Kidney (tissue), 22 donors: ENCODE measurements at regions of chr14 and their contacts with region 1.

Region 1: DNA sequence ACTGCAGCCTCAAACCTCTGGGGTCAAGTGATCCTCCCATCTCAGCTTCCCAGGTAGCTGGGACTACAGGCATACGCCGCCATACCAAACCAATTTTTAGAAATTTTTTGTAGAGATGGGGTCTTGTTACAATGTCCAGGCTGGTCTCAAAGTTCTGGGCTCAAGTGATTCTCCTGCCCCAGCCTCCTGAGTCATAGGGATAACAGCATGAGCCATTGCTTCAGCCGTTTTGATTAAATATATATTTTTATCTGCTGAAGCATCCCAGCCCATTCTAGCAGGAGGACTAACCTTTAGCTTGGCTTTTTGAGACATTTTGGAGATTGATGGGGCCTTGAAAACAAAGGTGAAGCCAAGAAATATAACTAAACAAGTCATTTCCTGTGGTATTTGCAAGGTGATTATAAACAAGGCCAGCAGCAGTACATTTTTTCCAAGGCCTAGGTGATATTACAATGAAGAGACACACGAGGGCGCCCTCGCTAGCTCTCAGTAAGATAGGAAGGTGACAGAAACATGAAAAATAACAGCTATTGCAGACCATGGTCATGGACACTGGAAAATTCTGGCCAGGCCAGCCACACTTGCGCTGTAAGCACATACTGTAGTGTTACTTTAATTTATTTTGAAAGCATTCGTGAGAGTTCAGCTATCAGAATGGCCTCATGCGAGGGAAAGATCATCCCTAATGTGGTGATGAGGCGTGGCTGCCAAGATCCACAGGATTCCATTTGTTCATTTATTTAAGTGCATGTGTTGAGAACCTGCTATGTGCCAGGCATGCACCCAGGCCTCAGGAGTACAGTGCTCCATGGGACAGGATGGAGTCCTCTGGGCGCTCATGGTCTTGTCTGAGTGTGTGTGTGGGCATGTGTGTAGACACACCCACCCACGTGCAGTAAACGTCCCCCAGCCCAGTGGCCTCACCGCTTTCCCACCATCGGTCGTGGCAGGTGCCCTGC is 63.5 kb downstream of the DGLUCY start:
- DNase-seq: peak; percentile 58 to 81 (median 68)
- H3K4me3 ChIP-seq: no peak overlapping the region
- H3K27ac ChIP-seq: no peak overlapping the region
- H3K4me1 ChIP-seq: no peaks in the 10 kb centered on the region
- H3K27me3 ChIP-seq: no peaks in the 10 kb centered on the region
- CTCF ChIP-seq: peak; percentile 62

Region 2: GRCh38 chr14:90903101-90903500 is 274.3 kb before region 1 on chr14:
- intact Hi-C with region 1: loop called (anchors 5 kb)
- DNase-seq: peak in 4 of 5 donors; percentile 43 to 76 (median 58)
- H3K4me3 ChIP-seq: no peak overlapping the region
- H3K27ac ChIP-seq: no peak overlapping the region
- H3K4me1 ChIP-seq: no peaks in the 10 kb centered on the region
- H3K27me3 ChIP-seq: no peaks in the 10 kb centered on the region
- CTCF ChIP-seq: peak; percentile 80

Region 3: GRCh38 chr14:91047174-91047753 is 130.1 kb before region 1 on chr14:
- intact Hi-C with region 1: no loop called
- DNase-seq: no peak
- H3K4me3 ChIP-seq: no peak overlapping the region
- H3K27ac ChIP-seq: no peak overlapping the region
- H3K4me1 ChIP-seq: no peaks in the 10 kb centered on the region
- H3K27me3 ChIP-seq: no peaks in the 10 kb centered on the region
- CTCF ChIP-seq: no peak

Region 4: GRCh38 chr14:91272341-91273272 is 95.3 kb after region 1 on chr14:
- intact Hi-C with region 1: loop called (anchors 5 kb)
- DNase-seq: peak in 1 of 5 donors; percentile 72
- H3K4me3 ChIP-seq: no peak overlapping the region
- H3K27ac ChIP-seq: no peak overlapping the region
- H3K4me1 ChIP-seq: peaks cover 0 to 9% (median 5%) of the 10 kb centered on the region in 3 donors
- H3K27me3 ChIP-seq: no peaks in the 10 kb centered on the region
- CTCF ChIP-seq: no peak